Adrenal gland (tissue), 19 donors: ENCODE measurements at regions of chr1 and their contacts with region 1.

Region 1: GRCh38 chr1:28602536-28603439 is 10.7 kb downstream of the RAB42 start:
- DNase-seq: peak; percentile 63 to 87 (median 72)
- H3K4me3 ChIP-seq: no peak overlapping the region
- H3K27ac ChIP-seq: peak overlapping the region in 1 of 5 donors; percentile 60
- H3K4me1 ChIP-seq: peaks cover 0 to 9% of the 10 kb centered on the region in 2 donors
- H3K27me3 ChIP-seq: no peaks in the 10 kb centered on the region
- CTCF ChIP-seq: peak; percentile 21 to 84 (median 72)
- POLR2A ChIP-seq: no peak

Region 2: DNA sequence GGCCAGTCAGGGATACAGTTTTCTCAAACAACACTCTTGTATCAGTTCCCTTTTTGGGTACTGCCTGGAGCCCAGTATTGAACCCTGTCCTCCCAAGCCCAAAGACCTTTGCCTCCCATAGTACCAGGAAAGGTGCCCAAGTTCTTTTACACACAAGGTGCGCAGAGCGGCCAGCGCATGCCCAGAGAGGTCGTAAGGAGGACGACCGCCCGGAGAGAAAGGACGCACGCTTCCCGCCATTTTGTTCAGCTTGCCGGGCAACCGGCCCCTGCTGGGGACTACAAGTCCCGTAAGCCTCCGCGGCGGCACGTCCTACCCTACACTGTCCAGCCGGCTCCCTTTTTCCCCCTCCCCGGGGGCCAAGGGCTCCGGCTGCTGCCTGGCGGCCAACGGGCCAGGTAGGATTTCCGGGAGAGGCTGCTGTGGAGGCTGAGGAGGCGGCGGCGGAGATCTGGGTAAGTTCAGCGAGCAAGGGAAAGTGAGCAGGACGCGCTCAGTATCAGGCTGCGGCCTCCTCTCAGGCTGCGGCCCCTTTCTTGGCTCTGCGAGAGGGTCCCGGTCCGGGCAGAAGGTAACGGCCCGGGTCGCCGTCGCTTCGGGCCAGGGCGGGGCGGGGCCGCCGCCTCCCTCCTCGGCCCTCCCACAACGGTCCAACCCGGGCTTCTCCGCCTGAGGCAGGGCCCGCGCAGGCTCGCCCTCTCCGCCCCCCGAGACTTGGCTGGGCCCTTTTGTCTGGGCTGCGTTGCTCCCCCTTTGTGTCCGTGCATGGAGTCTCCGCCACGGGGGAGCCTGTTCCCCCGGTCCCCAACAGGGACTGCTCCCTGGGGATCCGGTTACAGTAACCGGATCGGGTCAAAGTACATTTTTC is 233.2 kb before region 1 on chr1 and contains the start of gene PHACTR4:
- intact Hi-C with region 1: loop called in 1 of 2 experiments (anchors 5 kb)
- DNase-seq: peak; percentile 91 to 97 (median 94)
- H3K4me3 ChIP-seq: peak within 1 kb of the TSS; percentile 18 to 97 (median 90)
- H3K27ac ChIP-seq: peak within 1 kb of the TSS; percentile 62 to 95 (median 93)
- H3K4me1 ChIP-seq: peaks cover 4 to 18% of the 10 kb centered on the region in 2 donors
- H3K27me3 ChIP-seq: no peaks in the 10 kb centered on the region
- CTCF ChIP-seq: peak in 1 of 6 experiments; percentile 12
- POLR2A ChIP-seq: peak; percentile 75 to 88
- total RNA-seq, gene PHACTR4: 12.0 to 32.8 (median 20.3) TPM

Region 3: DNA sequence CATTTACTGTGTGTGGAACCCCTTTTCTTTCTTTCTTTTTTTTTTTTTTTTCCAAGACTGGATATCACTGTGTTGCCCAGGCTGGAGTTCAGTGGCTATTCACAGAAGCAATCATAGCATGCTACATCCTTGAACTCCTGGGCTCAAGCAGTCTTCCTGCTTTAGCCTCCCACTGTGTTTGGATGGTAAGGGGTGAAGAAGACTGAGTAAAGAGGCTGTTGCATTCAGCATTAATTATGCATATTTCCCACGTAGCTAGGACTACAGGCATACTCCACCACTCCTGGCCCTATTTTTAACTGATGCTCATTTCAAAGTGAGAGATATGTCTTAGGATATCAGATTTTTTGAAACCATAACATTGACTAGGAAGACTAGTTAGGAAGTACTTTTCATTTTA is 193.7 kb before region 1 on chr1:
- intact Hi-C with region 1: loop called (anchors 10 kb)
- DNase-seq: no peak
- H3K4me3 ChIP-seq: no peak overlapping the region
- H3K27ac ChIP-seq: no peak overlapping the region
- H3K4me1 ChIP-seq: no peaks in the 10 kb centered on the region
- H3K27me3 ChIP-seq: no peaks in the 10 kb centered on the region
- CTCF ChIP-seq: no peak
- POLR2A ChIP-seq: no peak

Region 4: DNA sequence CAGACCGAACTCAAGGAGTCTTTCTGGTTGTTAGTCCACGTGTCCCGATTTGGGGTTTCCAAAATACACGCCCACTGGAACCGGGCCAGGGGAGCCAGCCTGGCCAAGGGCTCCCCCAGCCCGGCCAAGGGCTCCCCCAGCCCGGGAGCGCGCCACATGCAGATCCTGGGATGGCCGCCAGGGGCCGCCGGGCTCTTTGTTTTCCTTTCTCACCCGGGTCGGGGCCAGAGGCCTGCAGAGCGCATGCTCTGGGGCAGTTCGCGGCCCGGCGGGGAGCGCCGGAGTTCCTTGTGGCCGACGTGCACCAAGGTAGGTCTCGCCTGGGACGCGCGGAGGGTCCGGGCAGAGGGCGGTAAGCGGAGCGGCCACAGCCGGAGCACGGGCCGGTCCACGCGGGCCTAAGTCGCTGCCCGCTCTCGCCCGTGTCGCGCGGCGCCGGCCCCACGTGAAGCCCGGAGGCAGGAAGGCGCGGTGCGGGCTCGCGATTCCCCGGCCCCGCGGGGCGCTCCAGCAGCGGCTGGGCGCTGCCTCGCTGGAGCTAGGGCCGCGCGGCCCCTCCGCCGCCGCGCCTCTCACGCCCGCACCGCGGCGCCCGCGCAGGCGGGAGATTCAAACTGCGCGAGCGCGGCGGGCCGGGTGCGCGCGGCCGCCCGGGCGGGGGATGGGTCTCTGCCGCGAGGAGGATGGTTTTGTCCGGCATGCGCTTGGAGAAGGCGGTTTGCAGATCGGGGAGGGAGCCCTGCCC is 84.6 kb before region 1 on chr1:
- intact Hi-C with region 1: loop called (anchors 5 to 10 kb)
- DNase-seq: peak; percentile 90 to 94 (median 91)
- H3K4me3 ChIP-seq: peak overlapping the region in 2 of 4 donors; percentile 33 to 82
- H3K27ac ChIP-seq: peak overlapping the region in 4 of 5 donors; percentile 57 to 92 (median 70)
- H3K4me1 ChIP-seq: peaks cover 6 to 14% of the 10 kb centered on the region in 2 donors
- H3K27me3 ChIP-seq: no peaks in the 10 kb centered on the region
- CTCF ChIP-seq: peak; percentile 95 to 99 (median 96)
- POLR2A ChIP-seq: peak; percentile 43 to 65

Region 5: GRCh38 chr1:28682840-28683239 is 80.1 kb after region 1 on chr1:
- intact Hi-C with region 1: no loop called
- DNase-seq: no peak
- H3K4me3 ChIP-seq: no peak overlapping the region
- H3K27ac ChIP-seq: no peak overlapping the region
- H3K4me1 ChIP-seq: no peaks in the 10 kb centered on the region
- H3K27me3 ChIP-seq: no peaks in the 10 kb centered on the region
- CTCF ChIP-seq: no peak
- POLR2A ChIP-seq: no peak